ENCODE measurements at regions of chr14 and their contacts with region 1.

Region 1: DNA sequence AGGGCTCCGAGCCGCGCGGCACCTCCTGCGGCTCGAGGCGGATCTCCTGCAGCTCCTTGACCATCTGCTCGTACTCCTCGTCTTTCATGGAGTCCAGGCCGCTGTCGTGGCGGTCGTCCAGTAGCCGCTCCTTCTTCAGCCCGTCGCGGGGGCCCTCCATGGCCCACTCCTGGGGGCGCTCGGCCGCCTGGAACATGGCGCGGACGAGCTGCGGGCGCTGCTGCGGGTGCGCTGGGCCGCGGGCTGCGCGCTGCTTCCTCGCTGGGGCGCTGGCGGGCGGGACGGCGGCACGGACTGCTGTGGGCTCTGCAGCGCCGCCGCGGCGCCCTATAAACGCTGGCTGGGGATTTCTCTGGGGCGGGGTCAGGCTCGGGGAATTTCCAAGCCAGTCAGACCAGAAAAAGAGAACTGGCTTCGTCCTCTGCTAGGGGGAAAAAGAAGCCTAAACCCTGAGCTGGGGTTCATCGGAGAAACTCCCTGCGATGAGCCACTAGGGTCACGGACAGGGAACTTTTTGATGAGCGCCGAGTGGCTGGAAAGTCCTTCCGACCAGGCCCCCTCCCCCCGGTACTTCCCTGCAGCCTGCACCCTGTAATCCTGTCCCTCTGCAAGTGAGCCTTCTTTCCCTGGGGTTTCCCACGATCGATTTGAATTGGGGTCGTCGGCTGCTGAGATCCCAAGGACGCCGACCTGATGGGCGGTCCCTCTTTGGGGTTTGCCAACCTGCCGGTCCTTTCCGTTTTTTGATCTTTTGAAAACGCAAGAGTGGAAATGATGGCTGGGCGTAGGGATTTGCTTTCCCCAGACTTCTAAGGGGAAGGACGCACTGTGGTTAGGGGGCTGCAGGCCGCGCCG is at the start of gene NFKBIA:
- DNase-seq: peak; percentile 95
- H3K4me3 Mint-ChIP-seq: peak within 1 kb of the TSS; percentile 100
- H3K27ac Mint-ChIP-seq: peak within 1 kb of the TSS; percentile 99
- H3K4me1 Mint-ChIP-seq: peaks cover 38% of the 10 kb centered on the region
- H3K27me3 Mint-ChIP-seq: no peaks in the 10 kb centered on the region
- total RNA-seq, gene NFKBIA: 591 and 599 TPM in 2 replicates

Region 2: GRCh38 chr14:35046048-35046741 is 358.5 kb before region 1 on chr14 and contains the start of gene FAM177A1:
- intact Hi-C with region 1: loop called (anchors 2 kb)
- DNase-seq: peak; percentile 96
- H3K4me3 Mint-ChIP-seq: peak within 1 kb of the TSS; percentile 97
- H3K27ac Mint-ChIP-seq: peak within 1 kb of the TSS; percentile 99
- H3K4me1 Mint-ChIP-seq: peaks cover 32% of the 10 kb centered on the region
- H3K27me3 Mint-ChIP-seq: no peaks in the 10 kb centered on the region
- total RNA-seq, gene FAM177A1: 43.2 and 46.3 TPM in 2 replicates

Region 3: GRCh38 chr14:35201066-35201465 is 203.6 kb before region 1 on chr14:
- intact Hi-C with region 1: loop called (anchors 1 kb)
- DNase-seq: no peak
- H3K4me3 Mint-ChIP-seq: peak overlapping the region; percentile 52
- H3K27ac Mint-ChIP-seq: peak overlapping the region; percentile 75
- H3K4me1 Mint-ChIP-seq: peaks cover 51% of the 10 kb centered on the region
- H3K27me3 Mint-ChIP-seq: no peaks in the 10 kb centered on the region

Region 4: GRCh38 chr14:35235840-35236239 is 168.8 kb before region 1 on chr14:
- intact Hi-C with region 1: no loop called
- DNase-seq: no peak
- H3K4me3 Mint-ChIP-seq: no peak overlapping the region
- H3K27ac Mint-ChIP-seq: no peak overlapping the region
- H3K4me1 Mint-ChIP-seq: peaks cover 38% of the 10 kb centered on the region
- H3K27me3 Mint-ChIP-seq: no peaks in the 10 kb centered on the region

Region 5: DNA sequence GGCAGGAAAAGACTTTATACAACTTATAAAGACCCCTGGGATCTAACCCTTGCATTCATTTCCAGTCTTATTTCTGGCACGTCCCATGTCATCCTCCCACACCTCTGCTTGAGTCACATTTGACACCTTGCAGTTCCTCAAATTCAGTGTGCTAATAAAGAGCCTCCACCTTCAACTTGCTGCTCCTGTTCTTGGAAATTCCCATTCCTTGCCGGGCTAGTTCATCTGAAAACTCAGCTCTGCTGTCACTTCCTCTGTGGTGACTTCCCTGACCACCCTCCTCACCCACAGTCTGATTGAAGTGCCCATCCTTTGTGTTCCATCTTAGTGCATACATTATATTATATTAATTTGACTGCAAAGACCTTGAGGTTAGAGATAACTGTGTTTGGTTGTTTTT is 149.9 kb before region 1 on chr14:
- intact Hi-C with region 1: loop called (anchors 1 kb)
- DNase-seq: peak; percentile 16
- H3K4me3 Mint-ChIP-seq: peak overlapping the region; percentile 51
- H3K27ac Mint-ChIP-seq: peak overlapping the region; percentile 32
- H3K4me1 Mint-ChIP-seq: peaks cover 60% of the 10 kb centered on the region
- H3K27me3 Mint-ChIP-seq: no peaks in the 10 kb centered on the region

Region 6: GRCh38 chr14:35332517-35333346 is 71.9 kb before region 1 on chr14:
- intact Hi-C with region 1: loop called (anchors 1 kb)
- DNase-seq: peak; percentile 43
- H3K4me3 Mint-ChIP-seq: peak overlapping the region; percentile 60
- H3K27ac Mint-ChIP-seq: peak overlapping the region; percentile 83
- H3K4me1 Mint-ChIP-seq: peaks cover 31% of the 10 kb centered on the region
- H3K27me3 Mint-ChIP-seq: no peaks in the 10 kb centered on the region

Measured in activated T-helper 1 cell treated with anti-CD3 and anti-CD28 coated beads, Interleukin-12 subunit alpha, Interleukin-12 subunit beta, Interleukin-2, Interleukin-4 antibody, amounts not matched to agents 30 ng/mL and 10 ng/mL and 1 ng/mL, durations not matched to agents 14 hours and 24 hours and 36 hours (primary cell).